Activated CD4-positive, alpha-beta memory T cell treated with anti-CD3 and anti-CD28 coated beads, Interleukin-2, amount 10 ng/mL, durations not matched to agents 7 days and 5 days (primary cell): ENCODE measurements at regions of chr9 and their contacts with region 1.

Region 1: GRCh38 chr9:34603610-34604231 is 8.2 kb downstream of the RPP25L start:
- DNase-seq: peak; percentile 82
- H3K4me3 Mint-ChIP-seq: no peak overlapping the region
- H3K27ac Mint-ChIP-seq: no peak overlapping the region
- H3K4me1 Mint-ChIP-seq: no peaks in the 10 kb centered on the region
- H3K27me3 Mint-ChIP-seq: peaks cover 22% of the 10 kb centered on the region

Region 2: GRCh38 chr9:34430843-34431437 is 172.8 kb before region 1 on chr9:
- CTCF ChIA-PET with region 1: interaction called, 15 read pairs
- POLR2A ChIA-PET with region 1: no interaction called
- DNase-seq: peak; percentile 39
- H3K4me3 Mint-ChIP-seq: no peak overlapping the region
- H3K27ac Mint-ChIP-seq: no peak overlapping the region
- H3K4me1 Mint-ChIP-seq: no peaks in the 10 kb centered on the region
- H3K27me3 Mint-ChIP-seq: no peaks in the 10 kb centered on the region

Region 3: DNA sequence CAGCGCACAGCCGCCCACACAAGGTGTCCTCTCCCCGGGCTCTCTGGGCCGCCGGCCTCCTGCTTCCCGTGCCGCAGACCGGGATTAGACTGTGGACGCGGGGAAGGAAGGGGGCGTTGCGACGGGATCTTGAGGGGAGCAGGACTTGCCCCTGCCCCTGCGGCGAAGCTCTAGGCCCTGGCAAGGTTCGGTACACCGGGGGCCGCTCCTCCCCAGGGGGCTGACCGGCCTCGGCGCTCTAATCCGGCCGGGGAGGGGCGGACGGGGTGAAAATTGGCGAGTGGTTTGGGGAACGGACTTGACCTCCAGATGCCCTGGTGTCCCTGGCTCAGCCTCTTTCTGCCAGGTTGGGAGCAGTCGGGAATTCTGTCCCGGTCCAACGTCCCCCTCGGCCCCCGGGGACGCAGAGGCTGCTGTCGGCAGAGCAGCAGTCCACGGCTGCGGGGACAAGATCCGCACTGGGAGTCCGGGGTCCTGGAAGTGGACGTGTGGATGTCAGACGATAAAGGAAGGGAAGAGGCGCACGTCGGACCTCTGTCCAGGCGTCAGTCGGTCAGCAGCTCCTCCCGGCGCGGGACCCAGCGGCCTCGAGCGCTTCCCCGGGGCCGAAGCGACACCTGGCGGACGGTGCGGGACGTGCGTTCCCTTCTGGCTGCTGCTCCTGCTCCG is 12.3 kb before region 1 on chr9:
- CTCF ChIA-PET with region 1: interaction called, 12 read pairs
- POLR2A ChIA-PET with region 1: no interaction called
- DNase-seq: peak; percentile 77
- H3K4me3 Mint-ChIP-seq: peak overlapping the region; percentile 13
- H3K27ac Mint-ChIP-seq: no peak overlapping the region
- H3K4me1 Mint-ChIP-seq: peaks cover 34% of the 10 kb centered on the region
- H3K27me3 Mint-ChIP-seq: peaks cover 70% of the 10 kb centered on the region